ENCODE measurements at regions of chr12 and their contacts with region 1.

Region 1: DNA sequence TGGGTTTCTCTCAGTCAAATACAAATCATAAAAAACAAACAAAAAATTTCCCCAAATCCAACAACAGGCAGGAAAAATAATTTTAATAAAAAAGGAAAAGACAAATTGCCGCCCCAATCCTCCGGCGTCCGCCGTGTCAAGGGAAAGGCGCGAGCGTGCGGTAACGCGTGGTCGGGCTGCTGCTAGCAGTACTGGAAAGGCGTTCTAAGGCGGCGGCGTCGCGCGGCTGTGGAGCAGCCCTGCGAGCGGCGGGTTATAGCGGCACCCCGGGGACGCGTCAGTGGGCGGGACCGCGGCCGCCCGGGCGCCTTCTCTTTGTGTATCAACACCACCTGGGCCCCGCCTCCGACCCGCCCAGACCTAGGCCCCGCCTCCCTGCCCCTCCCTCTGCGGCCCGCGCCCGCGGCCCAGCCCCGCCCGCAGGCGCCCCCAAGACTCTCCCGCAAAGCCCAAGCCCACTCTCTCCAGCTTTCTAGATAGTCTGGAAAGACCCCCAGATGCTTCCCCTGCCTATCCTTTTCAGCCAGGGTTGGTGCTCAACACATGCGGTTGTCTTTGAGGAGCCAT is at the start of gene SLC38A2:
- DNase-seq: peak; percentile 92
- H3K4me3 Mint-ChIP-seq: peak within 1 kb of the TSS; percentile 93
- H3K27ac Mint-ChIP-seq: peak within 1 kb of the TSS; percentile 98
- H3K4me1 Mint-ChIP-seq: peaks cover 12% of the 10 kb centered on the region
- H3K27me3 Mint-ChIP-seq: no peaks in the 10 kb centered on the region
- CTCF ChIP-seq: no peak
- total RNA-seq, gene SLC38A2: 817 and 1,070 TPM in 2 replicates

Region 2: GRCh38 chr12:46198913-46199312 is 173.7 kb before region 1 on chr12:
- CTCF ChIA-PET with region 1: no interaction called
- POLR2A ChIA-PET with region 1: no interaction called
- intact Hi-C with region 1: no loop called
- DNase-seq: no peak
- H3K4me3 Mint-ChIP-seq: no peak overlapping the region
- H3K27ac Mint-ChIP-seq: no peak overlapping the region
- H3K4me1 Mint-ChIP-seq: no peaks in the 10 kb centered on the region
- H3K27me3 Mint-ChIP-seq: no peaks in the 10 kb centered on the region
- CTCF ChIP-seq: no peak

Region 3: DNA sequence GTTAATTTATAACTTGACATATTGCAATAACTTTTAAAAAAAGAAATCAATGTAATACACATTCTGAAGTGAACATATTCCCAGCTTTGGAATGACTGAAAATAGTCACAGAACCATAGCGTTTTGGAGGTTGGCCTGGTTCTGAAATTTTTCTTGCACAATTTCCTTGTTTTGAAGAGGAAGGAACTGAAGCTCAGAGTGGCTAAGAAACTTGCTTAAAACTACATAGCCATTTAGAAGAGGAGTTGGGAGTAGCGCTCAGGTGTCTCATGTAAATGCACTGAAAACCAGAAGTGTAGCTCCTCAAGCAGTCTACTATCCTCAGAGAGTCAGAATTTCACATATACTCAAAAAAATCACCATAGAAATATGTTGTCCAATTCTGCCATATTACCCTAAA is 145.0 kb before region 1 on chr12:
- CTCF ChIA-PET with region 1: no interaction called
- POLR2A ChIA-PET with region 1: no interaction called
- intact Hi-C with region 1: no loop called
- DNase-seq: no peak
- H3K4me3 Mint-ChIP-seq: no peak overlapping the region
- H3K27ac Mint-ChIP-seq: no peak overlapping the region
- H3K4me1 Mint-ChIP-seq: peaks cover 19% of the 10 kb centered on the region
- H3K27me3 Mint-ChIP-seq: no peaks in the 10 kb centered on the region
- CTCF ChIP-seq: no peak

Region 4: DNA sequence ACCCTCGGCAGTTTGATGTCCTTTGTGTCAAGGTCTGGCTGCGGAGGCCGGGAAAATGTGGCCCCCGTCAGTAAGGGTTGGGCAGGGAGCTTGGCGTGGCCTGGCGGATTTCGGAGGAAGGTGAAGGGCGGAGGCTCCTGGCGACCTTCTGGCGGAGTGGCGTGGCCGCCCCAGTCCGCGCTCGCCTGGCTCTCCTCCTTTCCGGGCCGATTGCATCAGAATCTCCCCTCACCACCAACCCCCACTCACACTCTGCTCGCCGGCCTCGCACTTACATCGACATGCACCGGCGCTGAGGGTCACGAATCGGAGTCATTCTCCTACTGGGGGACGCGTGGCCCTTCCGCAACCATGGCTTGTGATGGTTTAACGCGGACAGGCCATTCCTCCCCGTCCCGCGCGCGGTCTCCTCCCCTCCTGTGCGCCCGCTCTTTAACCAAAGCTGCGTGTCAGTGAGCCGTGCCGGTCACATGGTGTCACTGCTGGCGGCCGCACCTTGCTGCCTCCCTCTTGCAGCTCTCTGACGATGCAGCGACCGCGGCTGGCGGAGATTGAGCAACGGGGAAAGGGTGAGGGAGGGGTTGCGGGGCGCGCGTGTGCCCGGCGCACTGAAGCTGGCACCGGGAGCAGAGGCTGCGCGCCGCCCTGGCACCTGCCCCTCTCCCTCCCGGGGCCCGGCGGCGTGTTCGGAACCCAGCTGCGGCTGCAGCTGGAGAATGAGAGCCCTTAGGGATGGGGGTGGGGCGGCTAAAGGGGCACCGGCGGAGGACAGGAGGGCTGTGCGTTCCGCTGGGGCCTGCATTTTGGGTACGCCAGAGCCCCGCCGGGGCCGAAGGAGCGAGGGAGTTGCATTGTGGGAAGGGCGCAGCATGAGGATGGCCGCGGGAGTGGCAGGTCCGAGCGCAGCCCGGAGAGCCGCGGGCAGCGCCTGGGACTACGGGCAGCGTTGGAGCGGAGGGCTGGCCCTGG is 103.8 kb before region 1 on chr12 and contains the start of gene SLC38A1:
- CTCF ChIA-PET with region 1: no interaction called
- POLR2A ChIA-PET with region 1: interaction called, 133 read pairs
- intact Hi-C with region 1: loop called (anchors 2 kb)
- DNase-seq: peak; percentile 96
- H3K4me3 Mint-ChIP-seq: no peak within 1 kb of the TSS
- H3K27ac Mint-ChIP-seq: no peak within 1 kb of the TSS
- H3K4me1 Mint-ChIP-seq: peaks cover 6% of the 10 kb centered on the region
- H3K27me3 Mint-ChIP-seq: no peaks in the 10 kb centered on the region
- CTCF ChIP-seq: no peak
- total RNA-seq, gene SLC38A1: 327 and 339 TPM in 2 replicates

Region 5: DNA sequence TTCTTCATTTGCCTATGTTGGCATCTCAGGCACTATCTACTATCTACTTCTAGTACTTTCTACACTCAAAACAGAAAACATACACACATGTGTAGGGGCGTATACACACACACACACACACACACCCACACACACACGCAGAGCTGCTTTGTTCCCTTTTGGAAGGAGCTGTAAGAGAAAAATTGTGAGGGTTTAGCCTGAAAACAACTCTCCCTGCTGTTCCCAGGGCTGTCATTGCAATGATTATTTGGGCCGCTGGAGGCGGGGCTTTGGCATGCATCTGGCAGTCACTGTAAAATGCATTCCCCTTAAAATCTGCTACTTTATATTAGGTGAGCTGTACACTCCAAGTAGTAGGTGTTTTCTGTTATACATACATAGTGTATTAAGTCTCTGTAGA is 29.0 kb after region 1 on chr12:
- CTCF ChIA-PET with region 1: no interaction called
- POLR2A ChIA-PET with region 1: interaction called, 29 read pairs
- intact Hi-C with region 1: no loop called
- DNase-seq: peak; percentile 49
- H3K4me3 Mint-ChIP-seq: no peak overlapping the region
- H3K27ac Mint-ChIP-seq: peak overlapping the region; percentile 86
- H3K4me1 Mint-ChIP-seq: peaks cover 48% of the 10 kb centered on the region
- H3K27me3 Mint-ChIP-seq: no peaks in the 10 kb centered on the region
- CTCF ChIP-seq: peak; percentile 19

Region 6: DNA sequence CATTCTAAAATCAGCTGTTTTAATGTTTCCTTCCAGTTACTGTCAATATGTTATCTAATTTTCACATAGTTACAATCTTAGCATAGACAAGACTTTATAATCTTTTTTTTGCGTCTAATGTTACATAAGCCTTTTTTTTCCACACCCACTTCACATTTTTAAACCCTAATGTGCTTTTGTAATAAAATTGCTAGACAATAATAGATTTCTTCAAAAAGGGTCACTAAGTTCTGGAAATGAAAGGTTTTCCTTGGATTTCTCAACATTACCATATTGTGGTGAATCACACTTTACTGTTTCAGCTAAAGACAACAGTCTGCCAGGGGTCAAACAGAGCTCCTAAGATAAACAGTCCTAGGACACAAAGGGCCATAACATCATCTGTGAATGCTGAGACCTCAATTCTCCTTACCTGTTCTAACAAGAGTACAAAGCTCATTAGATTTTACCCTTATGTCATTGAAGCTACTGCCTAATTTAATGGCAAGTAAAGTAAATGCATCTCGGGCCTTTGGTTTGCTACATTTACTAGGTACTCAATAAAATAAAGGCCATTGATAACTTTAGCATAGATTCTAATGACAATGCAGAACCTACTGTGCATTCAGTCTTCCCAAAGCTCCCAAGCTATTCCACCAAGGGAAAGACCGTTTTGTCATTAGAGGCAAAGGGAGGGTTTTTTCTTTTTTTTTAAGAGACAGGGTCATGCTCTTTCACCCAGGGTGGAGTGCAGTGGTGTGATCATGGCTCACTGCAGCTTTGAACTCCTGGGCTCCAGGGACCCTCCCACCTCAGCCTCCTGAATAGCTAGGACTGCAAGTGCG is 111.2 kb after region 1 on chr12:
- CTCF ChIA-PET with region 1: no interaction called
- POLR2A ChIA-PET with region 1: interaction called, 12 read pairs
- intact Hi-C with region 1: no loop called
- DNase-seq: peak; percentile 73
- H3K4me3 Mint-ChIP-seq: no peak overlapping the region
- H3K27ac Mint-ChIP-seq: peak overlapping the region; percentile 57
- H3K4me1 Mint-ChIP-seq: peaks cover 9% of the 10 kb centered on the region
- H3K27me3 Mint-ChIP-seq: no peaks in the 10 kb centered on the region
- CTCF ChIP-seq: no peak

Region 7: DNA sequence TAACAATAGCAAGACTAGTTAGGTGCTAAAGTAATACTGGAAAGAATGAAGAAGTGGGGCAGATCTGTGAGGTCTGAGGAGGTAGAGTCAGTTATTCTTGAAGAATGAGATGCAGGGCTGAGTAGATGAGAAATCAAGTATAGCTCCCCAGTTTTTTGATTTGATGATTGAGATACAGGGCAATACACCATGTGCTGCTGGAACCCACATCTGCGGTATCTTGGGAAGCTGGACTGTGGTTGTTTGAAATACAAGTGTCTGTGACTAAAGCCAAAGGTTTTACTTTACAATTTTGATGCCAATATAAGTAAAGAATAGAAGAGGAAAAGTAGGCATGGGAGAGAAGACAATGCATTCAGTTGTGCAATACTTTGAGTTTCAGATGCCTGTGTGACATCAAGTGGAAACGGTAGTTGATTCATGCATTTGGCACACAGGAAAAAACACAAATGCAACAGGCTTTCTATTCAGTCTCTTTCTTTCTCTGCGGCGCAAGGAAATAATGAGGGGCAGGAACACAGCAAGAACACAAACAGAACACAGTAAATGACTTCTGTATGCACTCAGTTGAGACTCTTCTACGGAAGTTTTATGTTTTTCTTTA is 190.1 kb after region 1 on chr12:
- CTCF ChIA-PET with region 1: interaction called, 4 read pairs
- POLR2A ChIA-PET with region 1: interaction called, 76 read pairs
- intact Hi-C with region 1: no loop called
- DNase-seq: peak; percentile 95
- H3K4me3 Mint-ChIP-seq: peak overlapping the region; percentile 26
- H3K27ac Mint-ChIP-seq: peak overlapping the region; percentile 69
- H3K4me1 Mint-ChIP-seq: peaks cover 40% of the 10 kb centered on the region
- H3K27me3 Mint-ChIP-seq: no peaks in the 10 kb centered on the region
- CTCF ChIP-seq: no peak

Measured in MCF 10A (cell line).